ENCODE measurements at regions of chr7 and their contacts with region 1.

Region 1: DNA sequence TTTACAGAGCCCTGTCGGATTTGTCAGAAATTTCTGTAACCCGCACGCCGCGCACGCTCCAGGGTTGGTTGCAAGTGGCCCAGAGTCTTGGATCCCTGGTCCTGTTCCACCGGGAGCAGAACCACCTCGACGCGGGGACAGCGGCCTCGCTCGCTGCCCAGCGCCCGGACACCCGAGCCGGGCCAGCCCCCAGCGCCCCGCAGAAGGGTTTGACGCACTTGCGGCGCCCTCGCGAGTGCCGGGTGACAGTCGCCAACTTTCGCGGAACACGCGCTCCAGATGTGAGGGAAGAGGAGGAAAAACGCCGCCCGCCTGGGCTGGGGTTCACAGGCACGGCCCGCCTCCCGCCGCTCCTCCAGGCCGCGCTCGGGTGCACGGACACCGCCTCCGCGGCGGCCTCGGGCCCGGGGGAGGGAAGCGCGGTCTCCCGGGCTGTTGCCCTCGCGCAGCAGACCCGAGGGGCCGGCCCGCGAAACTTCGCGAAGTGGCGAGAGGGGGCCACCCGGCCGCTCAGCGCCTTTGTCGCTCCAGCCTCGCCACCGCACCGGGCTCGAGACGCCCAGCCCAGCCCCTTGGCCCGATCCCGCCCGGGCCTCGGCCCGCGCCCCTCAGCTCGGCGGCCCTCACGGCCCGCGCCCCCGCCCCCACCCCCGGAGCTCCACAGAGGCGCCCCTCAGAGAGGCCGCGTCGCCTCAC is 514 bp downstream of the RNF216 start:
- DNase-seq: peak; percentile 46
- H3K4me3 ChIP-seq: peak overlapping the region; percentile 73 to 93 (median 73)
- H3K27ac ChIP-seq: peak overlapping the region; percentile 30
- H3K4me1 ChIP-seq: peaks cover 3% of the 10 kb centered on the region
- H3K27me3 ChIP-seq: no peaks in the 10 kb centered on the region
- CTCF ChIP-seq: no peak
- POLR2A ChIP-seq: no peak

Region 2: DNA sequence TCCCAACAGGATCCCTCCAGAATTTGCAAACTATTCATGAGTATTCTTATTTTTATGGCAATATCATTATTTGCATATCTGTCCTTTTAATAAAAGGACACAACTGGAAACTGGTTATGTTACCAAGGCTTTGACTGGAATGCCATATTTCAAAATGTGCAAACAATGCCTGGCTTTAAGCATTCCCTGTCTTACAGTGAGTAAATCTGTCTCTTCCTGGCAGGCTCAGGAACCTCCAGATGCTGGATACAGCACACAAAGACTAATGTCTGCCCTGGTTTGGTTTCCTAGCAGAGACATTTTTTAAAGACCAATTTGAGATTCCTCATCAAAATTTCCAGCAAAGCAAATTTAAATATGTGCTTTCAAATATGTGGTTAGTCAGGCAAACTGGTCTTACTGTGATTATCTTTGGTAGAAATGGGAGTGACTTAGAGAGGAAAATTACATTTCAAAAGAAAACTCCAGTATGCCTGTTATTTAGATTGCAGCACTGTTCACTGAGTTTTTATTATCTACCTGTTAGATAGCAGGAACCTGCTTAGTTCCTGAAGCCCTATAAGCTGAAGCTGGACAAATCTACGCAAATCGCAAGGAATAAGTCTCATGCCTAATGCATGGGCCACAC is 30.8 kb before region 1 on chr7:
- CTCF ChIA-PET with region 1: interaction called, 10 read pairs
- POLR2A ChIA-PET with region 1: no interaction called
- dilution Hi-C with region 1: no loop called
- intact Hi-C with region 1: no loop called
- DNase-seq: no peak
- H3K4me3 ChIP-seq: no peak overlapping the region
- H3K27ac ChIP-seq: no peak overlapping the region
- H3K4me1 ChIP-seq: no peaks in the 10 kb centered on the region
- H3K27me3 ChIP-seq: no peaks in the 10 kb centered on the region
- CTCF ChIP-seq: no peak
- POLR2A ChIP-seq: no peak

Region 3: DNA sequence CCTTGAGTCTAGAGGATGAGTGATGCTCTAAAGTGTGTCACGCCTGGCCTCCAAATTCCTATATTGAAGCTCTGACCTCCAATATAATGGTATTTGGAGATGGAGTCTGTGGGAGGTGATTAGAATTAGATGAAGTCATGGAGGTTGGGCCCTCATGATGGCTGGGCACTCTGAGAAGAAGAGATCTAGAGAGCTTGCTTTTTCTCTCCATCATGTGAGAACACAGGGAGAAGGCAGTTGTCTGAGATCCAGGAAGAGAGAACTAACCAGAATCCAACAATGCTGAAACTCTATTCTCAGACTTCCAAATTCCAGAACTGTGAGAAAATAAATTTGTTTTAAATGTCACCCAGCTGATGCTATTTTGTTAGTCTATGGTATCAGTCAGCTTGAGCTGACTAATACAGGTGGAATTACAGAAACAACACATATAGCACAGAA is 14.6 kb before region 1 on chr7:
- CTCF ChIA-PET with region 1: interaction called, 33 read pairs
- POLR2A ChIA-PET with region 1: interaction called, 3 read pairs
- dilution Hi-C with region 1: no loop called
- intact Hi-C with region 1: no loop called
- DNase-seq: peak; percentile 11
- H3K4me3 ChIP-seq: no peak overlapping the region
- H3K27ac ChIP-seq: no peak overlapping the region
- H3K4me1 ChIP-seq: peaks cover 8% of the 10 kb centered on the region
- H3K27me3 ChIP-seq: no peaks in the 10 kb centered on the region
- CTCF ChIP-seq: no peak
- POLR2A ChIP-seq: no peak

Region 4: DNA sequence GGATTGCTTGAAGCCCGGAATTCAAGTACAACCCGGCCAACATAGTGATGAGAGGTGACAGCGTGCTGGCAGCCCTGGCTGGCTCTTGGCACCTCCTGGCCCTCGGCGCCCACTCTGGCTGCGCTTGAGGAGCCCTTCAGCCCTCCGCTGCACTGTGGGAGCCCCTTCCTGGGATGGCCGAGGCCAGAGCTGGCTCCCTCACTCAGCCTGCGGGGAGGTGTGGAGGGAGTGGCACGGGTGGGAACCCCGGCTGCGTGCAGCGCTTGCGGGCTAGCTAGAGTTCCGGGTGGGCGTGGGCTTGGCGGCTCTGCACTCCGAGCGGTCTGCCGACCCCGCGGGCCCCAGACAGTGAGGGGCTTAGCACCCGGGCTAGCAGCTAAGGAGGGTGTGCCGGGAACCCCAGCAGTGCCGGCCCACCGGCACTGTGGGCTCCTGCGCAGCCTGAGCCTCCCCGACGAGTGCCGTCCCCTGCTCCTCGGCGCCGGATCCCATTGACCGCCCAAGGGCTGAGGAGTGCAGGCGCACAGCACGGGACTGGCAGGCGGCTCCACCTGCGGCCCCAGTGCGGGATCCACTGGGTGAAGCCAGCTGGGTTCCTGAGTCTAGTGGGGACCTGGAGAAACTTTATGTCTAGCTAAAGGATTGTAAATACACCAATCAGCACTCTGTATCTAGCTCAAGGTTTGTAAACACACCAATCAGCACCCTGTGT is 12.6 kb after region 1 on chr7:
- CTCF ChIA-PET with region 1: interaction called, 10 read pairs
- POLR2A ChIA-PET with region 1: no interaction called
- dilution Hi-C with region 1: no loop called
- intact Hi-C with region 1: no loop called
- DNase-seq: no peak
- H3K4me3 ChIP-seq: no peak overlapping the region
- H3K27ac ChIP-seq: no peak overlapping the region
- H3K4me1 ChIP-seq: no peaks in the 10 kb centered on the region
- H3K27me3 ChIP-seq: no peaks in the 10 kb centered on the region
- CTCF ChIP-seq: no peak
- POLR2A ChIP-seq: no peak

Region 5: DNA sequence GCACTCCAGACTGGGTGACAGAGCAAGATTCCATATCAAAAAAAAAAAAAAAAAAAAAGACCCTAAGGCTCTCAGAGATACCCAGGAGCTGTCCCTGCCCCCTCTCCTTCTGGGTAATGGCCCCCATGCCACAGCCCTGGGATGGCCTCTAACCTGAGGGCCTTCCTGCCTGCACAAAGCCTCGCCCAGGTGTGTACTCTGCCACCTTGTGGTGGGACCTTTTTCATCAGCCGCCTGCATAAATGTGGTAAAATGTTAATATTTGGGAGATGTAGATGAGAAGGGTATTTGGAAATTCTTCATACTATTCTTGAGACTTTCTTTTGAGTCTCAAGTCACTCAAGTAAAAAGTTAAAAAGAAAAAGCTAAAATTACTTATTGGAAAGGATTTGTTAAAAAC is 46.8 kb after region 1 on chr7:
- CTCF ChIA-PET with region 1: interaction called, 8 read pairs
- POLR2A ChIA-PET with region 1: interaction called, 3 read pairs
- dilution Hi-C with region 1: no loop called
- intact Hi-C with region 1: loop called (anchors 2 kb)
- DNase-seq: peak; percentile 16
- H3K4me3 ChIP-seq: no peak overlapping the region
- H3K27ac ChIP-seq: no peak overlapping the region
- H3K4me1 ChIP-seq: peaks cover under 1% of the 10 kb centered on the region
- H3K27me3 ChIP-seq: no peaks in the 10 kb centered on the region
- CTCF ChIP-seq: peak; percentile 37 to 45
- POLR2A ChIP-seq: no peak

Region 6: DNA sequence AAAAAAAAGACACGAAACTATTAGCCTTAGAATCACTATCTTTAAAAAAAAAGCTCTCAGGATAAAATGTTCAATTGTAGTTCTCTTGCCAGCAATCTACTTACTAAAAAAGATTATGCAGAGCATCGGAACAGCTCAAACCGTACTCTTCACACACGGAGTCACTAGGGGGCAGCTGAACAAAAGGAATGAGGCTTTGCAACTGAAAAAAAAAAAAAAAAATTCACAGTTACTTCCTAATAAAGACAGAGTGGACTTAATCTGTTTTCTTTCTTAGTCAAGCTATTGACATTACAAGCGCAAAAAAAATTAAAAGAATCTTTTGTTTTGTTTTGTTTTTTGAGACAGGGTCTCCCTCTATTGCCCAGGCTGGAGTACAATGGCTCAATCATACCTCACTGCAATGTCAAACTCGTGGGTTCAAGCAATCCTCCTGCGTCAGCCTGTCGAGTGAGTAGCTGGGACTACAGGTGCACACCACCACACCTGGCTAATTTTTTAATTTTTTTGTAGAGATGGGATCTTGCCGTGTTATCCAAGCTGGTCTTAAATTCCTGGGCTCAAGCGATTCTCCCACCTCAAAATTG is 216.4 kb after region 1 on chr7:
- CTCF ChIA-PET with region 1: no interaction called
- POLR2A ChIA-PET with region 1: no interaction called
- dilution Hi-C with region 1: no loop called
- intact Hi-C with region 1: no loop called
- DNase-seq: peak; percentile 74
- H3K4me3 ChIP-seq: no peak overlapping the region
- H3K27ac ChIP-seq: no peak overlapping the region
- H3K4me1 ChIP-seq: no peaks in the 10 kb centered on the region
- H3K27me3 ChIP-seq: no peaks in the 10 kb centered on the region
- CTCF ChIP-seq: peak; percentile 30 to 53
- POLR2A ChIP-seq: no peak

Measured in endothelial cell of umbilical vein (primary cell).